HepG2 (cell line): ENCODE measurements at regions of chr2 and their contacts with region 1.

Region 1: DNA sequence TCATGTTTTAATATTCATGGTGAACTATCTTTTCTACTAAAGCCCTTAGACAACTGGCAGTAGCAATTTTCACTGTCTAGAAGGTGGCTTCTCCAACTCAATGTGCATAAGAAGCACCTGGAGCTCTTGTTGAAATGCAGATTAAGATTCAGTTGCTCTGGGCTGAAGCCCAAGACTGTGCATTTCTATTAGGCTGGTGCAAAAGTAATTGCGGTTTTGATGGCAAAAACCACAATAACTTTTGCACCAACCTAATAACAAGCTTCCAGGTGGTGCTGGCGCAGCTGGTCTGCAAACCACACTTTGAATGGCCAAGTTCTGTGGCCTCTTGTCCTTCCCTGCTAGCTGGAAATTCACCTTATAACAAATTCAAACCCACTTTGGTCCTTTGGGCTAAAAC is 26.7 kb upstream of the VPS54 start:
- DNase-seq: no peak
- ATAC-seq: no peak
- H3K4me3 ChIP-seq: no peak overlapping the region
- H3K27ac ChIP-seq: no peak overlapping the region
- H3K4me1 ChIP-seq: peaks cover 10% of the 10 kb centered on the region
- H3K27me3 ChIP-seq: no peaks in the 10 kb centered on the region
- CTCF ChIP-seq: no peak
- EP300 ChIP-seq: no peak
- POLR2A ChIP-seq: no peak
- RAD21 ChIP-seq: no peak

Region 2: GRCh38 chr2:64311948-64312621 is 266.1 kb after region 1 on chr2:
- CTCF ChIA-PET with region 1: interaction called, 5 read pairs
- POLR2A ChIA-PET with region 1: interaction called, 5 read pairs
- in situ Hi-C with region 1: no loop called
- intact Hi-C with region 1: loop called (anchors 5 kb)
- DNase-seq: peak; percentile 85
- ATAC-seq: peak; percentile 94
- H3K4me3 ChIP-seq: peak overlapping the region in 1 of 3 experiments; percentile 9; a peak in 2 of 6 replicates
- H3K27ac ChIP-seq: no peak overlapping the region
- H3K4me1 ChIP-seq: peaks cover 26% of the 10 kb centered on the region
- H3K27me3 ChIP-seq: peaks cover 3 to 25% of the 10 kb centered on the region in 2 experiments; a peak in 3 of 5 replicates
- CTCF ChIP-seq: peak; percentile 76
- EP300 ChIP-seq: 0 out of 4 replicates have a peak, but pooled peaks of 1 of the 2 experiments have one; percentile 21
- POLR2A ChIP-seq: no peak
- RAD21 ChIP-seq: peak; percentile 33

Region 3: DNA sequence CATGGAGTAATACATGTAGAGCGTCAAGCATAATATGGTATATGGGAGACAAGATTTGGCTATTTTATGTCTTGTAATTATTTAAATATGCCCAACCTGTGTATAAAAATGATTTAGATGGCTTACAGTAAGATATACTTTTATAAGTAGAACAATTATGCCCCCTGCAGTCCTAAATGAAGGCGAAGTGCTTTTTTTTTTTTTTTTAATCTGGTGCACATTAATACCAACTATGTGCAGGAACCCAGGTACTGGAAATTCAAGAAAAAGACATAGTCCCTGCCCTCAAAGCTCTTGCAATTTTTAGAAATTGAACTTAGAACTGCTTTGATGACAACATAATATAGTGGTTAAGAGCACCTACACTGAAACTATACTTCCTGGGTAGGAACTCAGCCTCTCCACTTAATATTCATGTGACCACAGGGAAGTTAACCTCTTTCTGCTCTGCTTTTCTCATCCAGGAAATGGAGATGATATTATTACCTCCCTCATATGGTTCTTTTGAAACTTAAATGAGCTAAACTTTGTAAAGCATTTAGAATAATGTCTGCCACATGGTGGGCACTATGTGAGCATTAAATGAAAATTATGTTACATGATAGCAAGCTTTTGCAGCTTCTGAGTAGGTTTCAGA is 516.3 kb after region 1 on chr2:
- CTCF ChIA-PET with region 1: no interaction called
- POLR2A ChIA-PET with region 1: no interaction called
- in situ Hi-C with region 1: no loop called
- intact Hi-C with region 1: loop called (anchors 5 kb)
- DNase-seq: peak; percentile 26
- ATAC-seq: peak; percentile 38; the same call in 1 of the 3 replicates
- H3K4me3 ChIP-seq: no peak overlapping the region
- H3K27ac ChIP-seq: no peak overlapping the region
- H3K4me1 ChIP-seq: no peaks in the 10 kb centered on the region
- H3K27me3 ChIP-seq: no peaks in the 10 kb centered on the region
- CTCF ChIP-seq: peak; percentile 48
- EP300 ChIP-seq: no peak
- POLR2A ChIP-seq: no peak
- RAD21 ChIP-seq: no peak